ENCODE measurements at regions of chr11 and their contacts with region 1.

Region 1: DNA sequence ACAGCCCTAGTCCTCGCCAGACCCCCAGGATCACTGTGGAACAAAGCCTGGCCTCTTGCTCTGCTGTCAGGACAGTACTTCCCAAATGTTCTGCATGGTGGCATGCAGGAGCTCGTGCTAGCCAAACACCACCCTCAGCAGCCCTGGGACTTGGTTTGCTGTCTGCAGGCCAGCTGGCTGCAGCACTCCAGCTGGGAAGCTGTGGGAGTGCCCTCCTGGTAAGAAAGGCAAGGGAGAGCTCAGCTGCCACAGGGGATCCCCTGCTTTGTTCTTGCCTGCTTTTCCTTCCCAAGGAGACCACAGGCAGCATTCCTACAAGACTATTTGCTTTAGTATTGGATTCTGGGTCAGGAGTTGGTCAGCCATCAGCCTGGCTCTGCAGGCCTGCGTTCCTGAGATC is 27.9 kb downstream of the TCIRG1 start:
- DNase-seq: peak in 1 of 7 donors; percentile 25
- H3K4me3 ChIP-seq: no peak overlapping the region
- H3K27ac ChIP-seq: no peak overlapping the region
- H3K4me1 ChIP-seq: no peaks in the 10 kb centered on the region
- H3K27me3 ChIP-seq: no peaks in the 10 kb centered on the region
- CTCF ChIP-seq: no peak
- POLR2A ChIP-seq: no peak

Region 2: GRCh38 chr11:68191661-68192579 is 125.2 kb after region 1 on chr11:
- intact Hi-C with region 1: loop called in 1 of 2 experiments (anchors 10 kb)
- DNase-seq: no peak
- H3K4me3 ChIP-seq: no peak overlapping the region
- H3K27ac ChIP-seq: no peak overlapping the region
- H3K4me1 ChIP-seq: peaks cover 3 to 35% of the 10 kb centered on the region in 2 donors
- H3K27me3 ChIP-seq: no peaks in the 10 kb centered on the region
- CTCF ChIP-seq: no peak
- POLR2A ChIP-seq: no peak

Region 3: DNA sequence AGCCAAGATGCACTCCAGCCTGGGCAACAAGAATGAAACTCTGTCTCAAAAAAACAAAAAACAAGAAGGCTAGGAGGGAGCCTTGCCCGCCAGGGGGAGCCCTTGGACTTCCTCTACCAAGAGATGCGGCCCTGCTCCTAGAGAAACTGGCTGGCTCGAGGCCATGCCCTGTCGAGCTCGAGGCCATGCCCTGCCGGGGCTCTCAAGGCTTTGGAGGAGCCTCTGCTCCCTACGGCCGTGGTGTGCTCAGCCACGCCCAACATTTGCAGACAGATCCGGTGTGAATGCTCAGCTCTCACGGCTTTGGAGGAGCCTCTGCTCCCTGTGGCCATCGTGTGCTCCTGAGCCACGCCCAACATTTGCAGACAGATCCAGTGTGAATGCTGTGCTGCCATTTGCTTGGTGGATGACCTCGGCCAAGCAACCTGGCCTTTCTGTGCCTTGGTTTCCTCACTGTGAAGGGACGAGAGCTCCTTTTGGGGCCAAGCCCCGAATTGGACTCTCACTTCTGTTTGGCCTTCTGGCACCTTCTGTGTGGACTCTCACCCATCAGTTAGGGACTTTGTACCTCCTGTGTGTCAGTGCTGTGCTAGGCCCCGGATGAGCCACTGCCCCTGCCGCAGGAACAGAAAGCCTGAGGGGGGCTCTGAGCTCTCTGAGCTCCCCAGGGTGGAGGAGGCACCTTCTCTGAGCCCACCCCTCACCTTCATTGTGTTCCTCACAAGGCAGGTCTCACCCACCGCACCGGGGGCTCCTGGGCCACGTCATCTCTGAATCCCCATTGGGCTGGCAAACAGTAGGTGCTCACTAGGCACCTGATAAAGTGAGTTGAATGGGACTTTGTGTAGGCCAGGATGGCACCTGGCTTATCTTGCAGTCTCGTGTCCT is 191.0 kb after region 1 on chr11:
- intact Hi-C with region 1: no loop called
- DNase-seq: peak; percentile 96 to 99 (median 99)
- H3K4me3 ChIP-seq: no peak overlapping the region
- H3K27ac ChIP-seq: peak overlapping the region in 1 of 5 donors; percentile 35
- H3K4me1 ChIP-seq: peaks cover 0 to 5% of the 10 kb centered on the region in 2 donors
- H3K27me3 ChIP-seq: no peaks in the 10 kb centered on the region
- CTCF ChIP-seq: peak; percentile 91 to 96 (median 94)
- POLR2A ChIP-seq: no peak